Endothelial cell of umbilical vein (primary cell): ENCODE measurements at regions of chr1 and their contacts with region 1.

Region 1: DNA sequence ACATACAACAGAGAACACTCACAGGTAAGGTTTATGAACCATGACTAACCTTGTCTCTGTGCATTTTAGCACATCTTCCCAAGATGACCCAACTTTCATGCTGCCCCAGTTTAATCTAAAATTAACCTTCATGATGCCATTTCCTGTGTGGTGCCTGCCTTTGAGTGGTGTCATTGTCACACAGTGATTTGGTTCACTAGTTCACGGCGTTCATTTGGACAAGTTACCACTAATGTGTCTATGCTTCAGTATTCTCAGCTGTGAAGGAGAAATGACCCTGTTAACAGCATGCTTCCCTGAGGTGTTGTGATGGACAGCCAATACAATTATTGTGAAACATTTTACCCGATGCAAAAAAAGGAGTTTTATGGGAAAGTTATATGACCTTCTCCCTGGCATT is 693.1 kb downstream of the RWDD3 start:
- DNase-seq: no peak
- H3K4me3 ChIP-seq: no peak overlapping the region
- H3K27ac ChIP-seq: no peak overlapping the region
- H3K4me1 ChIP-seq: peaks cover 21% of the 10 kb centered on the region
- H3K27me3 ChIP-seq: no peaks in the 10 kb centered on the region
- CTCF ChIP-seq: no peak
- POLR2A ChIP-seq: no peak

Region 2: DNA sequence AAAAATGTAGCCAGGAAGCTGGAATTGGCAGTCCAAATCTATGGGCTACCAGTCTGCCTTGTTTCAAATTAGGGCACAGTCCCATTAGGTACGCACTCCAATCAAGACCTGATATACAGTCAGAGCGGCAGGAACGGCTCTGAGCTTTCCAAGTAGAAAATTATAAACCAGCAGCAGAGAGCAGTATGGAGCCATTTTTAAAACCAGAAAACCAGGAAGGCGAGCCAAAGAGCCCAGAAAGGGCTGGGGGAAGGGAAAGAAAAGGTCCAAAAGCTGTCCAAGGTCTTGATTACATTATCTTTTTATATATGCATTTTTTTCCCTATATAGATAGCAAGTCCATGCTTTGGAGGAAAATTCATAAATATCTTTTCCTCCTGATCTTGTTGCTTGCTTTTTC is 26.0 kb after region 1 on chr1:
- CTCF ChIA-PET with region 1: no interaction called
- POLR2A ChIA-PET with region 1: no interaction called
- dilution Hi-C with region 1: no loop called
- intact Hi-C with region 1: loop called (anchors 2 kb)
- DNase-seq: peak; percentile 11
- H3K4me3 ChIP-seq: no peak overlapping the region
- H3K27ac ChIP-seq: no peak overlapping the region
- H3K4me1 ChIP-seq: peaks cover under 1% of the 10 kb centered on the region
- H3K27me3 ChIP-seq: peaks cover 2 to 3% of the 10 kb centered on the region in 2 experiments
- CTCF ChIP-seq: no peak
- POLR2A ChIP-seq: no peak

Region 3: GRCh38 chr1:95984798-95985374 is 57.8 kb after region 1 on chr1:
- CTCF ChIA-PET with region 1: no interaction called
- POLR2A ChIA-PET with region 1: no interaction called
- dilution Hi-C with region 1: no loop called
- intact Hi-C with region 1: no loop called
- DNase-seq: no peak
- H3K4me3 ChIP-seq: no peak overlapping the region
- H3K27ac ChIP-seq: no peak overlapping the region
- H3K4me1 ChIP-seq: no peaks in the 10 kb centered on the region
- H3K27me3 ChIP-seq: peaks cover 0 to 3% of the 10 kb centered on the region in 2 experiments
- CTCF ChIP-seq: no peak
- POLR2A ChIP-seq: no peak

Region 4: DNA sequence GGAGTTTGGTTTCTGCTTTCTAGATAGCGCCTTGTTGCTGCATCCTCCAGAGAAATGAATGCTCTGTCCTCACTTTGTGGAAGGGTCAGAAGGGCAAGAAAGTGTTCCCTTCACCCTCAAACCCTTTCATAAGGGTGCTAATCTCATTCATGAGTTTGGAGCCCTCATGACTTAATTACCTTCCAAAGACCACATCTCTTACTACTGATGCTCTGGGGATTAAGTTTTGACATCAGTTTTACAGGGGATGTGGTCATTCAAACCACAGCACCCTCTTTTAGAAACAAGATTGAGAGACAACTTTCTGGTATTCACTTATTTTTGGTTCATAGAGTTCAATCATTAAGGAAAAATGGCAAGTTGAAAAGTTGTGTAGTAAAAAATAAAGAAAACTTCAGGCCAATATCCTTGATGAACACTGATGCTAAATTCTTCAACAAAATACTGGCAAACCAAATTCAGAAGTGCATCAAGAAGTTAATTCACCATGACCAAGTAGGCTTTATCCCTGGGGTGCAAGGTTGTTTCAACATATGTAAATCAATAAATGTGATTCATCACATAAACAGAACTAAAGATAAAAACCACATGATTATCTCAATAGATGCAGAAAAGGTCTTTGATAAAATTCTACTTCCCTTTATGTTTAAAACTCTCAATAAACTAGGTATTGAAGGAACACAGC is 1236.7 kb after region 1 on chr1:
- CTCF ChIA-PET with region 1: no interaction called
- POLR2A ChIA-PET with region 1: no interaction called
- dilution Hi-C with region 1: no loop called
- intact Hi-C with region 1: no loop called
- DNase-seq: no peak
- H3K4me3 ChIP-seq: no peak overlapping the region
- H3K27ac ChIP-seq: no peak overlapping the region
- H3K4me1 ChIP-seq: no peaks in the 10 kb centered on the region
- H3K27me3 ChIP-seq: no peaks in the 10 kb centered on the region
- CTCF ChIP-seq: no peak
- POLR2A ChIP-seq: no peak